Heart right ventricle (tissue), 16 donors: ENCODE measurements at regions of chr7 and their contacts with region 1.

Region 1: DNA sequence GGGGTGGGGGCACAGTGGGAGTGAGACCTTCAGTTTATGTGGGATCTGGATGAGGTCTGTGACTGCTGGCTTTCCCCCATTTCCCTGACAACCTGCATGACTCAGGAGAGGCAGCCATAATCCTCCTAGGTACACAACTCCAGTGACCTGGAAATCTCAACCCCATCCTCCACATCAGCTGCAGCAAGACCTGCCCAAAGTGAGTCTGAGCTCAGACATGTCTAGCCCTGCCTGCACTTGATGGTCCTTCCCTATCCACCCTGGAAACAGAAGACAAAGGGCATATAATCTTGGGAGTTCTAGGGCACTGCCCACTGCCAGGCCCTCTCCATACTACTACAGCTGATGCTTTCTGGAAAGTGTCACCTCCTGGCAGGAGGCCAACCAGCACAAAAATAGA is 75.6 kb downstream of the GRM8 start:
- DNase-seq: no peak
- ATAC-seq: no peak
- H3K4me3 ChIP-seq: no peak overlapping the region
- H3K27ac ChIP-seq: no peak overlapping the region
- H3K4me1 ChIP-seq: no peaks in the 10 kb centered on the region
- H3K27me3 ChIP-seq: no peaks in the 10 kb centered on the region
- CTCF ChIP-seq: no peak

Region 2: DNA sequence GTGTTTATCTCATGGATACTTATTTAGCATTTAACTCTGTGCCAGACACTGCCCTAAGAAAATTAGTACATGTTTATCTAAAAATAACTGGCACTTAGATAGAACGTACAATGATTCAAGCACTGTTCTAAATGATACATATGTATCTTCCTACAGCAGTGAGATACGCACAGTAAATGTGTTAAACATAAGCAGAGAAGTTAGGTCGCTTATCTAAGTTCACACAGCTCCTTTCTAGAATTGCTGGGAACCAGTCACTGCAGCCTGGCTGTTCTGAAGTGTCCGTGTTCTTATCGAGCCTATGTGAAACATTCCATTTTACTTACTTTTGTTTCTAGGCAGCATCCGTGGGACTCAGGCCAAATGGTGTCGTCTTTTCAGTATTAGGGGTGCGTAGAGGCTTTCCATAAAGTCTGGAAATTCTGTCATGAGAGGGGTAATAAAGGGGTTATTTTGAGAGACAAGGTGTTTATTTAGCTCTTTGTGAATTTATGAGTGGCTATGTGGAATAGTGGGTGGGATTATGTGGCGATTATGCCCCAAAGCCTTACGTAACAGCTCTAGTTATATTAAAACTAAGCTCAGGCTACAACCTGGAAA is 661.8 kb after region 1 on chr7:
- intact Hi-C with region 1: loop called in 1 of 10 experiments (anchors 5 kb)
- DNase-seq: peak in 1 of 2 donors; percentile 7
- ATAC-seq: peak in 1 of 8 donors; percentile 20
- H3K4me3 ChIP-seq: peak overlapping the region in 1 of 10 donors; percentile 1
- H3K27ac ChIP-seq: no peak overlapping the region
- H3K4me1 ChIP-seq: peaks cover 0 to 10% (median 3%) of the 10 kb centered on the region in 9 donors
- H3K27me3 ChIP-seq: no peaks in the 10 kb centered on the region
- CTCF ChIP-seq: no peak